Dorsolateral prefrontal cortex (tissue), 120 donors: ENCODE measurements at regions of chr20 and their contacts with region 1.

Region 1: GRCh38 chr20:33992923-33993575 is 662 bp upstream of the RALY start:
- DNase-seq: peak; percentile 99 to 100 (median 99)
- H3K4me3 ChIP-seq: peak overlapping the region; percentile 77 to 99 (median 93)
- H3K27ac ChIP-seq: peak overlapping the region; percentile 88 to 100 (median 97)
- H3K27me3 ChIP-seq: no peaks in the 10 kb centered on the region
- CTCF ChIP-seq: peak in 33 of 56 donors; percentile 1 to 52 (median 29)

Region 2: DNA sequence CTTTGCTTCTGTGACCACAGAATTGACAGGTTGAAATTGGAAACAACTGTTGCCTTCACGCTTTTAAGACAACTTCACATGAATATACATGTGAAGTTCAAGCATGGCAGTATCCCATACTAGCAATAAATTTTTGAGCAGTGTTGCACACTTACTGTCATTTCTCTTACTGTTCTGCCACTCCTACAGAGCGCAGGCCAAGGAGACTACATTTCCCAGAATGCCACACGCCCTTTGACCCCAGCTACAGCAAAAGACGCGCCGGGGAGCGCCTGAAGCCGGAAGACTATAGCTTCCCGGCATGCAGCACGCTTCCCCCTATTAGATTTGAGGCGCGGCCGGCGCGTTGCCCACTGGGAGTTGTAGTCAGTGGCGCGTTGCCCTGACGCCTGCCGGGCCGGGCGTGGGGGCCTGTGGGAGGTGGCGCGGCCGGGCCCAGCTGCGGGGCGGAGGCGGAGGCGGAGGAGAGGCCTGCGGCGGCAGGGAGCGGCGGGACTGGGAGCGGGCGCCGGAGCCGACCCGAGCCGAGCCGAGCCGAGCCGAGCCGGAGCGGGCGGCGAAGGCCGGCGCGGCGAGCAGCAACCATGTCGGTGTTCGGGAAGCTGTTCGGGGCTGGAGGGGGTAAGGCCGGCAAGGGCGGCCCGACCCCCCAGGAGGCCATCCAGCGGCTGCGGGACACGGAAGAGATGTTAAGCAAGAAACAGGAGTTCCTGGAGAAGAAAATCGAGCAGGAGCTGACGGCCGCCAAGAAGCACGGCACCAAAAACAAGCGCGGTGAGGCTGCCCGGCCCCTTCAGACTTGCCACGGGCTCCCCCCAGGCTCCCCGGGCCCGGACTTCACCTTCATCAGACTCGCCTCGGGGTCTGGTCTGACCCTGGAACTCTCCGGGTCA is 181.9 kb before region 1 on chr20 and contains the start of gene CHMP4B:
- intact Hi-C with region 1: loop called (anchors 10 kb)
- DNase-seq: peak; percentile 98 to 99 (median 99)
- H3K4me3 ChIP-seq: peak within 1 kb of the TSS; percentile 66 to 100 (median 95)
- H3K27ac ChIP-seq: peak within 1 kb of the TSS in 57 of 59 donors; percentile 16 to 92 (median 83)
- H3K27me3 ChIP-seq: no peaks in the 10 kb centered on the region
- CTCF ChIP-seq: peak in 32 of 56 donors; percentile 7 to 57 (median 29)
- total RNA-seq, gene CHMP4B: 68.7 to 154 (median 115) TPM

Region 3: DNA sequence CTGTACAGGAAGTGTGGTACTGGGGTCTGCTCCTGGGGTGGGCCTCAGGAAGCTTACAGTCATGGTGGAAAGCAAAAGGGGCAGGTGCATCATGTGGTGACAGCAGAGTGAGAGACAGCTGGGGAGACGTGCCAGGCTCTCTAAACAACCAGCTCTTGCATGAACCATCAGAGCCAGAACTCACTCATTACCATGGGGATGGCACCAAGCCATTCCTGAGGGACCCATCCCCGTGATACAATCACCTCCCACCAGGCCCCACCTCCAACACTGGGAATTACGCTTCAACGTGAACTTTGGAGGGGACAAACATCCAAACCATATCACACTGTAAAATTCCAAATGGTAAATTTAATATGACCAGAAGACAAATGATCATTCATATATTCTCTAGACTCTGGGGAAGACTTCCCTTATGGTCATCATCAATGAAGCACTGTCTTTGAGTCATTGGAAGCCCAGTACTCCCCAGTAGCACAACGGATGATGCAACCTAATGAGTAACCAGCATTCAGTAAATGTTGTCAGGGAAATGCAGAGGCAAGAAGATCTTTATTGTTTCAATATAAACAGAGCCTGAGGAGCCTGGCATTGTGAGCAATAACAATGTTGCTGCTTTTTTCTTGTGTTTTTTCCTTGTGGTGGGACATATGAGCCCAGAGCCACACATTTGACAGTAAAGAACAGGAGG is 47.5 kb before region 1 on chr20:
- intact Hi-C with region 1: loop called (anchors 1 to 2 kb)
- DNase-seq: peak in 9 of 10 donors; percentile 37 to 85 (median 72)
- H3K4me3 ChIP-seq: peak overlapping the region in 4 of 59 donors; percentile 1 to 25 (median 10)
- H3K27ac ChIP-seq: peak overlapping the region in 58 of 59 donors; percentile 52 to 99 (median 93)
- H3K27me3 ChIP-seq: no peaks in the 10 kb centered on the region
- CTCF ChIP-seq: peak in 2 of 56 donors; percentile 12 to 15

Region 4: DNA sequence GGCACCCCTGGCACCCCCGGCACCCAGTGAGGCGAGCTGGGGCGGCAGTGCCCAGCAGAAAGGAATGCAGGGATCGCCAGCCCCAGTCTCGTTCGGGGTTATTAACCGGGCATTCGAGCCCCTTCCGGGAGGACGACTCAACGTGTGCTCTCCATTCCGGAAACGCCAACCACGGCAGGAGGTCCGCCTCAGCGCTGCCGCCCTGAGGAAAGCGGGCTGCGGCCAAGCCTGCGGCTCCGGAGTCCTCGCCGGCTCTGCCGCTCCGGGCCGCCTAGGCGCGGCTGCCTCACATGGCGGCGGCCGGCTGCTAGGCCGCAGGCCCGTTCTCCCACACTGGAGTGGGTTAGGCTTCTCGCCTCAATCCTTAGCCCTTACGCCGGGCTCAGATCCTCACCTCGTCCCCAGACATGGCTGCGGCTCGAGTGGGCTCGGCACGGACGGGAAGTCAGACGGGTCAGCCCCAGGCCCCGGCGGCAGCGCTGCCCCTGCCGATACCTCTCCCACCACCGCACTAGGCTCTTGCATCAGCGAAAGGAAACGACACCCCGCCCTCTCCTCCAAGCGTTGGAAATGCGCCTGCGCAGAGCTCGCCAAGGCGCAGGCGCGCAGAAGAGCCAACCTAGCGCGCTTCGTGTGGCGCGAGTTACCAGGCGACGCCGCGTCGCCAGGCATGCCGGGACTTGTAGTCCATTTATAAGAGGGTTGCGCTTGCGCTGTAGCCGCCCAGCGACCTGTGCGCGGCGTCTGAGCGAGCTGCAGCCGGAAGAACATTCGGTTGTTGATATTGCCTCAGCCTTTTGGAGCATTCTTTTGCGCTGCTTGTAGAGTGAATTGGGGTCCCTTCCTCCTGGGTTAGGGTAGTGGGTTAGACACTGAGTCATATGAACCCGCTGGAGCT is 118.9 kb after region 1 on chr20 and contains the start of gene EIF2S2:
- intact Hi-C with region 1: loop called (anchors 1 to 5 kb)
- DNase-seq: peak; percentile 81 to 94 (median 90)
- H3K4me3 ChIP-seq: peak within 1 kb of the TSS; percentile 71 to 100 (median 97)
- H3K27ac ChIP-seq: peak within 1 kb of the TSS; percentile 49 to 98 (median 92)
- H3K27me3 ChIP-seq: no peaks in the 10 kb centered on the region
- CTCF ChIP-seq: peak in 30 of 56 donors; percentile 2 to 53 (median 24)
- total RNA-seq, gene EIF2S2: 20.5 to 39.5 (median 30.6) TPM